Activated CD8-positive, alpha-beta T cell treated with anti-CD3 and anti-CD28 coated beads for 36 hours (primary cell): ENCODE measurements at regions of chr6 and their contacts with region 1.

Region 1: DNA sequence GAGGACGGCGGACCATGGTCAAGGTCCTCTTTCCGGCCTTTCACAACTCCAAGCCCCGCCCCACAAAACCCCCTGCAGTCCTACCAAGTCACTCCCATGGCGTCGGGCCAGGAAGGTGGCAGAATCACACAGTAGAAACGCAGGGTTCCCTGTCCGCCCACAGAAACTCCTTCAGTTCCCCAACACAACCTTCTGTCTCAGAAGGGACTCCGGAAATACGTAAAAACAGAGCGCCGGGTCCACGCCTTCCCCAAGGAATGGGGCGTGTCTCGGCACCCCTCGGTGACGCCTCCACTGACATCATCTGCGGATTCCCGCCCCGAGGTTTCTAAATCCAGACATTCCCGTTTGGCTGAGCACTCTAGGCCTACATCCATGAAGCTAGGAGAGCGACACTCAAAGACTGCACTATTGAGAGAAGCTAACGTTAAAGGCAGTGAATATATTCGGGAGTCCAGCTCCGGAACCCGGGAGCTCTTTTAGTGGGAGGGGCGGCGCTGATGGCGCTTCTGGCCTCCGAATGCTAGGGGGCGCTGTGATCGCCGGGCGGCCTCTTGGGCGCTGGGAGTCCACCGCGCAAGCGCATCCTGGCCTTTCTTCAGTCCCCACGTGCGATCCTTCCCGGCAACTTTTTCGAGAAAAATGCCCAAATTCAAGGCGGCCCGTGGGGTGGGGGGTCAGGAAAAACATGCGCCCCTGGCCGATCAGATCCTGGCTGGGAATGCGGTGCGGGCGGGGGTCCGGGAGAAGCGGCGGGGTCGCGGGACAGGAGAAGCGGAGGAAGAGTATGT is at the starts of genes BYSL and MED20:
- DNase-seq: peak; percentile 96
- ATAC-seq: peak; percentile 89
- H3K4me3 Mint-ChIP-seq: peak within 1 kb of the TSS; percentile 93
- H3K27ac Mint-ChIP-seq: peak within 1 kb of the TSS; percentile 99
- H3K4me1 Mint-ChIP-seq: peaks cover 47% of the 10 kb centered on the region
- H3K27me3 Mint-ChIP-seq: no peaks in the 10 kb centered on the region
- CTCF ChIP-seq: peak; percentile 95
- total RNA-seq, gene BYSL: 56.4 to 59.5 TPM
- total RNA-seq, gene MED20: 23.4 to 28.0 TPM

Region 2: DNA sequence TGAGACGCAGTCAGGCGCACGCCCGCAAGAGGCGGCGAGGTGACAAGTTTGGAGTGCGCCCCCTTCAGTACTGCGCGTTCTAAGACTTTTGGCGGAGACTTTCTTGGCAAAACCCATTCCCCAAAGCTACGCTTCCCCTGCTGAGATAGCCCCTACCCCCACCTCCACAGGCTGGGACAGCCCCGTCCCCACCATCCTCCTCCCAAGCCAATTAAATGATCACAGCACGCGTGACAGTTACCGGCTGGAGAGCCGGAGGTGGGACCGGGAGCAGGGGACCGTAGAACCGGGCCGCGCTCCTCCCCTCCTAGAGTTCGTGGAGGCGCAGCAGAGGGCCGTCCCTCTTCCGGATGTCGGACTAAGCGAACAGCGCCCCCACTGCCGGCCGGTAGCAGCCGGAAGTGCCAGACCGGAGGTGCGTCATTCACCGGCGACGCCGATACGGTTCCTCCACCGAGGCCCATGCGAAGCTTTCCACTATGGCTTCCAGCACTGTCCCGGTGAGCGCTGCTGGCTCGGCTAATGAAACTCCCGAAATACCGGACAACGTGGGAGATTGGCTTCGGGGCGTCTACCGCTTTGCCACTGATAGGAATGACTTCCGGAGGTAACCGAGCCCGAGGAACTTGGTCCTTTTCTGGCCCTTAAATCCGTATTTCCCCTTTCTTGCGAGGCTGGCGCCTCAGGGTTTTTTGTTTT is 133.7 kb before region 1 on chr6 and contains the start of gene TOMM6:
- CTCF ChIA-PET with region 1: interaction called, 29 read pairs
- POLR2A ChIA-PET with region 1: interaction called, 11 read pairs
- intact Hi-C with region 1: loop called (anchors 10 kb)
- DNase-seq: peak; percentile 97
- ATAC-seq: peak; percentile 86
- H3K4me3 Mint-ChIP-seq: peak within 1 kb of the TSS; percentile 91
- H3K27ac Mint-ChIP-seq: peak within 1 kb of the TSS; percentile 97
- H3K4me1 Mint-ChIP-seq: peaks cover 19% of the 10 kb centered on the region
- H3K27me3 Mint-ChIP-seq: no peaks in the 10 kb centered on the region
- CTCF ChIP-seq: peak; percentile 86
- total RNA-seq, gene TOMM6: 310 to 314 TPM

Region 3: GRCh38 chr6:41936073-41936837 is 15.1 kb after region 1 on chr6:
- CTCF ChIA-PET with region 1: interaction called, 115 read pairs
- POLR2A ChIA-PET with region 1: interaction called, 58 read pairs
- intact Hi-C with region 1: no loop called
- DNase-seq: peak; percentile 97
- ATAC-seq: peak; percentile 83
- H3K4me3 Mint-ChIP-seq: peak overlapping the region; percentile 90
- H3K27ac Mint-ChIP-seq: peak overlapping the region; percentile 91
- H3K4me1 Mint-ChIP-seq: peaks cover 50% of the 10 kb centered on the region
- H3K27me3 Mint-ChIP-seq: no peaks in the 10 kb centered on the region
- CTCF ChIP-seq: peak; percentile 86

Region 4: DNA sequence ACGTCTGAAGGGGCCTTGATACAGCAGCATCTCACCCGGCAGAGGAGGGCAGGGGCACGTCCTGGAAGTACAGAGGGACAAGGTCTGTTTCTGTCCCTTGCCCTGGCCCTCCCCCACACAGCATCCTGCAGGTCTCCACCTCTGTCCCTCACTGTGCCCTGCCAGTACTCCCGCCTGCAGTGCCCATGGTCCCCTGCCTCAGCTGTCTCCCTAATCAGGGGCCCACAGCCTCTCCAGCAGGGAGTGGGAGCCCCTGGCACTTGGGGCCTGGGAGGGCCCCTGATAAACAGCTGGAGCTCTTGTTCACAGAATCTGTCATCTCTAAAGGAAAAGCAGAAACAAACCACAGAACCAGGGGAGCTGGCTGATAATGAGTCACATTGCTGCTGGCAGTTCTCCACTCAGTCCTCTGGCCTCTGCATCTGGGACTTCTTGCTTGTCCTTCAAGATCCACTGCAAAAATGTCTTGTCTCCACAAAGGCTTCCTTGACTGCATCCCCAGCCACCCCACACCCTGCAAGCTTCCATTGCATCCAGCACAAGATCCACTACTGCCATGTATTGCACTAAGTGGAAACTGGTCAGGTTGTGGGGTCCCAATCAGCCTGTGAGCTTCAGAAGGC is 96.0 kb after region 1 on chr6:
- CTCF ChIA-PET with region 1: interaction called, 10 read pairs
- POLR2A ChIA-PET with region 1: interaction called, 5 read pairs
- intact Hi-C with region 1: no loop called
- DNase-seq: peak; percentile 74
- ATAC-seq: peak; percentile 66
- H3K4me3 Mint-ChIP-seq: peak overlapping the region; percentile 50
- H3K27ac Mint-ChIP-seq: peak overlapping the region; percentile 84
- H3K4me1 Mint-ChIP-seq: peaks cover 71% of the 10 kb centered on the region
- H3K27me3 Mint-ChIP-seq: no peaks in the 10 kb centered on the region
- CTCF ChIP-seq: no peak

Region 5: GRCh38 chr6:42050266-42051032 is 129.3 kb after region 1 on chr6 and contains the start of gene TAF8:
- CTCF ChIA-PET with region 1: interaction called, 119 read pairs
- POLR2A ChIA-PET with region 1: interaction called, 22 read pairs
- intact Hi-C with region 1: no loop called
- DNase-seq: peak; percentile 95
- ATAC-seq: peak; percentile 72
- H3K4me3 Mint-ChIP-seq: peak within 1 kb of the TSS; percentile 93
- H3K27ac Mint-ChIP-seq: peak within 1 kb of the TSS; percentile 98
- H3K4me1 Mint-ChIP-seq: peaks cover 65% of the 10 kb centered on the region
- H3K27me3 Mint-ChIP-seq: no peaks in the 10 kb centered on the region
- CTCF ChIP-seq: no peak
- total RNA-seq, gene TAF8: 40.0 to 42.3 TPM

Region 6: DNA sequence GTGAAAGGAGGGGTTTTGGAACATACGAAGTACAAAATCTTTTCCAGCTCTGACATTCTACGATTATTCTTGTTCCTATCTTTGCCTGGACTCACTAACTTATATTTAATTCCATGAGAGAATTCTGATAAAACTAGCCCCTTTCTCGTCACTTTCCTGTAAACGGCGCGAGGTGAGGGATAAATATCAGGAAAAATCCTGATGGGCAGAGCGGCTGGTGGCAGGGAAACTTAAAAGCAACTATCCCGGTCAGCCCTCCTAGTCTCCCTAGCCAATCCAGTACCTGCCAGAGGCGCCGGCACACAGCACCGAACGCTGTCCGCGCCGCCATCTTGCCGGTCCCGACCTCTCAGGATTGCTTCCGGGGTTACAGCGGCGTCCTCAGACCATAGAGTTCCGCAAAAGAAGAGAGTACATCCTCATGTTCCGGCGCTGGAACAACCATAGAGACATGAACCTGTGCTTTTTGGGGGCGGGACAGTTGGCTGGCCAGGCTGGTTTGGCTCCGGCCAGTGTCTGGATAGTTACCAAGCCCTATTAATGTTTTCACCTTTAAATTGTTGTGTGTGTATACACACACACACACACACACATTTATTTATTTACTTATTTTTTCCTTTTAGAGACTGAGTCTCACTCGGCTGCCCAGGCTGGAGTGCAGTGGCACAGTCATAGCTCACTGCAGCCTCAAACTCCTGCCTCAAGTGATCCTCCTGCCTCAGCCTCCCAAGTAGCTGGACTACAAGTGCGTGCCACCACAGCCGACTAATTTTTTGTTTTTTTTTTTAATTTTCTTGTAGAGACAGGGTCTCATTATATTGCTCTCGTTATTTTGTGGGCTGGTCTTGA is 296.6 kb after region 1 on chr6 and contains the start of gene MRPS10:
- CTCF ChIA-PET with region 1: interaction called, 5 read pairs
- POLR2A ChIA-PET with region 1: no interaction called
- intact Hi-C with region 1: loop called (anchors 10 kb)
- DNase-seq: peak; percentile 95
- ATAC-seq: peak; percentile 100
- H3K4me3 Mint-ChIP-seq: peak within 1 kb of the TSS; percentile 100
- H3K27ac Mint-ChIP-seq: peak within 1 kb of the TSS; percentile 97
- H3K4me1 Mint-ChIP-seq: peaks cover 31% of the 10 kb centered on the region
- H3K27me3 Mint-ChIP-seq: no peaks in the 10 kb centered on the region
- CTCF ChIP-seq: no peak
- total RNA-seq, gene MRPS10: 36.7 to 38.9 TPM